ENCODE measurements at regions of chr4 and their contacts with region 1.

Region 1: DNA sequence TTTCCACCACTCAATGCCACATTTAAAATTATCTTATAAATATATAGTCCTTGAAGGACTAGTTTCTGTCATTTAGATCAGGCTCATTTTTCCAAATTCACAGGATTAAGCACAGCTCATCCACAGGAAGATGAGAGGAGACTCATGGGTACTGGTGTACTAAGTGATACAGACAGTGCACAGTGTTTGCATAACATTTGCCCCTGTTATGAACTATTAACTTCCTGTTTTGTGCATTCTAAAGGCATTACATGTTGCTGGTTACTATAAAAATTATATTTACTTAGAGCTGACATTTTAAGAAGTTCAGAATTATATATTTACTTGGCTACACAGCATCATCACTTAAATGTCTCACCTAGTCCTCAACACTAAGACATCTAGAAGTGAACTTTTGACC is 772.0 kb downstream of the TECRL start:
- DNase-seq: no peak
- ATAC-seq: no peak
- H3K4me3 ChIP-seq: no peak overlapping the region
- H3K27ac ChIP-seq: no peak overlapping the region
- H3K4me1 ChIP-seq: no peaks in the 10 kb centered on the region
- H3K27me3 ChIP-seq: no peaks in the 10 kb centered on the region

Region 2: DNA sequence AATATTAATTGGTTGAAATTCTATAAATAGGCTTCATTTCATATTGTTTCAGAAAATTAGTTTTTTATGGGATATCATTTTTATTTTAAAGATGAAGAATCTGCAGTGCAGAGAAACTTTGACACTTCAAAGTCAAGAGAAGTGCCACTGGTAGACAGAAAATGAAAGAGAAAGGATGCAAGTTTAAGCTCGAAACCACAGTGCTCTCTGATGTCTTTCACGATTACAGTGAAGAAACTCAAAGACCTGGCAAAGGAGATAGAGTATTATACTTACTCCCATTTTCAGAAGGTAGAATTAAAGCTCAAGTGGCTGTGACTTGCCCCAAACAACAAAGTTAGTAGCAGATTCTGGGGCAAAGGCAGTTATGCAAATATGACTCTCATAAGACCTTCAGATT is 26.6 kb after region 1 on chr4:
- intact Hi-C with region 1: loop called in 1 of 4 experiments (anchors 2 kb)
- DNase-seq: no peak
- ATAC-seq: no peak
- H3K4me3 ChIP-seq: no peak overlapping the region
- H3K27ac ChIP-seq: no peak overlapping the region
- H3K4me1 ChIP-seq: no peaks in the 10 kb centered on the region
- H3K27me3 ChIP-seq: no peaks in the 10 kb centered on the region

Measured in right cardiac atrium (tissue), 5 donors.